Ovary (tissue), 10 donors: ENCODE measurements at regions of chr3 and their contacts with region 1.

Region 1: DNA sequence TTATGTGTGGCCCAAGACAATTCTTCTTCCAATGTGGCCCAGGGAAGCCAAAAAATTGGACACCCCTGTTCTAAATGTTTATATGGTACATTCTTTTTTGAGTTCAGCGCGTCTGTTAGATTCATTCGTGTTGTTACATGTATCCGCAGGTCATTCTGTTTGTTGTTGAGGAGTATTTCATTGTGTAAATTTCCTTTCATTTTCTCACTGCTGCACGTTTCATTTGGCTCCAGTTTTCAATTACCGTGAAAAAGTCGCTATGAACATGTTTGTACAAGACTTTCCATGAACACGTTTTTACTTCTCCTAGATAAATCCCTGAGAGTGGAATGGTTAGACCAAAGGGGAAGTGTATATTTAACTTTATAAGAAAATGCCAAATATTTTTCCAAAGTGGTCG is 7.5 kb upstream of the OPA1 start:
- DNase-seq: no peak
- H3K4me3 ChIP-seq: no peak overlapping the region
- H3K27ac ChIP-seq: no peak overlapping the region
- H3K4me1 ChIP-seq: no peaks in the 10 kb centered on the region
- H3K27me3 ChIP-seq: no peaks in the 10 kb centered on the region
- CTCF ChIP-seq: no peak
- EP300 ChIP-seq: no peak
- POLR2A ChIP-seq: no peak

Region 2: GRCh38 chr3:193605876-193606275 is 20.3 kb after region 1 on chr3:
- intact Hi-C with region 1: loop called in 1 of 4 experiments (anchors 2 kb)
- DNase-seq: peak in 1 of 5 donors; percentile 23
- H3K4me3 ChIP-seq: no peak overlapping the region
- H3K27ac ChIP-seq: no peak overlapping the region
- H3K4me1 ChIP-seq: peaks cover 2% of the 10 kb centered on the region
- H3K27me3 ChIP-seq: no peaks in the 10 kb centered on the region
- CTCF ChIP-seq: no peak
- EP300 ChIP-seq: no peak
- POLR2A ChIP-seq: no peak

Region 3: GRCh38 chr3:193946945-193947344 is 361.4 kb after region 1 on chr3:
- intact Hi-C with region 1: no loop called
- DNase-seq: no peak
- H3K4me3 ChIP-seq: no peak overlapping the region
- H3K27ac ChIP-seq: no peak overlapping the region
- H3K4me1 ChIP-seq: no peaks in the 10 kb centered on the region
- H3K27me3 ChIP-seq: no peaks in the 10 kb centered on the region
- CTCF ChIP-seq: no peak
- EP300 ChIP-seq: no peak
- POLR2A ChIP-seq: no peak